ENCODE measurements at regions of chr12 and their contacts with region 1.

Region 1: DNA sequence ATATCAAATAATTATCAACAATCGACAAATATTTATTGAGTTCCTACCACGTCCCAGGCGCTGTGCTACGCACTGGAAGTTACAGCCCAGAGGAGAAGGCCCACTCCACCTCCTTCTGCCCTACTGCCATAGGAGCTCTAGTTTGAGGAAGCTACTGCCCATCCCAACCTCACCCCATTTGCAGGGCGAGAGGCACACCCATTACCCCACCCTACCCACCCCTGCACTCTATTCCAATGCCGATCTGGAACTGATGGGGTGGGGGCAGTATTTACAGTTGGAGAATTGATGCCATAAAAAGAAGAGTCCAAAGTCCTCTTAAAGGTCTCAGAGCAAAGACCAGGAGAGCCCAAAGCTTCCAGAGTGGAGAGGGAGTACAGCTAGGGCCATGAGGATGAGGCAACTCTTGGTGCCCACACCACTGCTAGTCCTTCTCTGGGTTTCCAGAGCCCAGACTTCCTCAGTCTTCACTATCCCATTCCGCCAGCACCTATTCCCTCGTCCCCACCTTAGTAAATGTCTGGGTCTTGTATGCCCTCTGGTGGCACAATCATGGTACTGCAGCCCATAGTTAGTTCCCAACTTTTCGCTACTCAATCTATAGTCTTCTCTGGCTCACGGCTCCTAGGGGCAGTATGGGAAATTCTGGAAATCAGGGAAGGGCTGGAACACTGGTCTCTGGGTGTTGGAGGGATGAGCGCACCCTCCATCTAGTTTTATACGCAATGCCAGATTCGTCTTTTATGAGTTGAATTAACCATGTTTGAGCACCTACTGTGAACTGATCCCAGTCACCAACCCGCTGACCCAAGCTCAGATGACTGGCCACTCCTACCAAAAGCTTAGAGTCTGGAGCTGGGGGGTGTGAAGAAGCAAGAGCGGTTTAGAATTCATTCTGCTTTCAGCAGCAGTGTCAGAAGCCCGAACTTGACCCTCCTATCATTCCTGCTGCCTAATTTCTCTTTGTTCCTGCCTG is 6.9 kb upstream of the ADCY6 start:
- DNase-seq: peak; percentile 62
- ATAC-seq: peak; percentile 93

Region 2: DNA sequence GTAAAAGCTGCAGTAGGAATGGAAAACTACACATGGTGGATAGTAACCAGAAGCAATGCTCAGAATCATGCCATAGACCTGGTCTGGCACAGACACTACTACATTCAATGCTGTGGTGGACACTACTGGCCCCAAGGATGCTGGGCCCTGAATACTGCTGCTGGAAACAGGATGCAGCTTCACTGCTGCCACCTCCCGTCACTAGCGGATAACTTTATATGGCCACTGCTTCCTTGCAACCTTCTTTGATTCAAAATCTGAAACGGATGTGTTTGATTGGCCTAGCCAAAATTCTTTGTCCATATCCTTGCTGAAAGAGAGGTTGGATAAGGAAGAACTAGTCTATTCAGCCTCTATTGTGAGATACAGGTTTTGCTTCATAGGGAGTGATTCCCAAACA is 37.5 kb before region 1 on chr12:
- intact Hi-C with region 1: loop called (anchors 1 kb)
- DNase-seq: no peak
- ATAC-seq: no peak

Region 3: DNA sequence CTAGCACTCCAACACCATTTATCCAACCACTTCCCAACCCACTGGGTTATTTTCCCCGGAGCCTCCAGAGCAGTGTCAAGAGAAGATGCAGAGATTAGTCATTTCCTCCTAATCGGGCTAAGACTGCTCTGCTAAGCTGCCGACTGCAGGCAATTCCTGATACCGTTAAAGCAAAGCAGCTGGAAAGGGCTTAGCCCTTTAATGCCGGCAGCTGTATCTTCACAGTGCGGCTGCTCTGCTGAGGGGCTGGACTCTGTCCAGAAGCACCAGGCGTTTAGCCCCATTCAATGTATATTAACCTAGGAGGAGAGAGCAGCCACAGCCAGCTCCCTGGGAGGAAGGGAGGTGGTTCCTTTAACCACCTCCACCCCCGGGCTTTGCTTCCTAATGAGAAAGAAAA is 1188.1 kb after region 1 on chr12:
- intact Hi-C with region 1: no loop called
- DNase-seq: no peak
- ATAC-seq: peak; percentile 62

Measured in Right ventricle myocardium superior (tissue), 1 donor.